Endothelial cell of umbilical vein (primary cell): ENCODE measurements at regions of chr11 and their contacts with region 1.

Region 1: DNA sequence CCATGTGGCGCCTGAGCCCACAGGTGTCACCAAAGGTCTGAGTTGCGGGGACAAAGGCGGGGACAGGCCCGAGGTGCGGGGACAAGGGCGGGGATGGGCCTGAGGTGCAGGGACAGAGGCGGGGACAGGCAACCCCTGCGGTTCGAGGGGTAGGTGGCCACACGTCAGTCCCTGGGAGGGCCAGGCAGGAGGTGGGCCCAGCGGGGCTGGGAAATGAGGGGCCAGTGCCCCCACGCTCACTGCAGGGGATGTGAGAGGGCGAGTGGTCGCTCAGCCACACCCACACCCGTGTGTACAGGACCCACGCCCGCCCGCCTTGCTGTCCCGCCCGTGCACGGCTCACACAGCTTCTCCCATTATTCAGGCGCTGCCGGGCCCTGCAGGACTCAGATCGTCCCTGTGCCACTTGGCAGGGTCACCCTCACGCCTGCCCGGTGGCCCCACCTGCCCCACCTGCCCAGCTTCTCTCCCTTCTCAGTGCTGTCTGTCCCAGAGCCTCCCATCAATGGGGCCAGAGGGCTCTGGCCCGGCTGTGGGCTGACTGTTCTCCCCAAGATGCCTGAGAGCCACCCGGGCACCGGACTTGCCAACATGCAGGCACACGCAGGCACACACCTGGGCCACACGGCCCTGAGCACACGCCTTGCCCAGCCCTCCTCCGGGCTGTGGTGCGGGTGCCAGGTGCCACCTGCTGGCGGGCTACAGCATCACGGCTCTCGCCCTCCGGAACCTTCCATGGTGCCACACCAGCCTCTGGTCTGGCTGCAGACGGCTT is 14.2 kb upstream of the MUC6 start:
- DNase-seq: peak; percentile 57
- H3K4me3 ChIP-seq: no peak overlapping the region
- H3K27ac ChIP-seq: no peak overlapping the region
- H3K4me1 ChIP-seq: no peaks in the 10 kb centered on the region
- H3K27me3 ChIP-seq: peaks cover 4 to 5% of the 10 kb centered on the region in 2 experiments
- CTCF ChIP-seq: peak; percentile 86 to 98
- POLR2A ChIP-seq: no peak

Region 2: DNA sequence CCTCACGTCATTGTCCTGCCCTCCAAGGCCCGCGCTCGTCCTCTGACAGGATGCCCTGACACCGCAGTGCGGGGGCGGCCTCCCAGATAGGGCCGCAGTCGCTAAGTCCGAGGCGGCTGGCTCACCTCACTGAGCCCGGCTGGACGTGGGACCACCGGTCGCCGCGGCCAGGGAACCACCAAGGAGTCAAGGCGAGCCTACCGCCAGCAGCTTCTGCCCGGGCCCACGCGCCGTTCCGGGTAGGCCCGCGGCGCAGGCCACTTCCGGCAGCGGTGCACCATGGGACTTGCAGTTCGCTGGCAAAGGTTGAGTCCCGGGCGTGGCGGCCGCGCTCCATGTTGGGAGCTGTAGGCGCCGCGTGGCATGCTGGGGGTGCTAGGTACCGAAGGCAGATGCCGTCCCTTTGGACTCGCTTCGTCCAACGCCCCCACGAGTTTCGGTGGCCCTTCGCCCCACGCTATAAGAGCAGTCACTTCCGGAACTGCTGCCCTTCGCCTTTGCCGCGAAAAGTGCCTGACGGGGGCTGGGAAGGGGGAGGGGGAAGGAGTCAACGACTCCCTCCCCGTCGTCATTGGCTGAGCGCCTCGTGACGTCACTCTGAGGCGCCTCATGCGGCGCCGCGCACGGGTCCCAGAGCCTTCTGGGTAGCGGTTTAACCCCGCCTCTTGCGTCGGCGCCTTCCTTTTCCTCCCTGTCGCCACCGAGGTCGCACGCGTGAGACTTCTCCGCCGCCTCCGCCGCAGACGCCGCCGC is 241.3 kb before region 1 on chr11 and contains the start of gene RPLP2:
- CTCF ChIA-PET with region 1: interaction called, 11 read pairs
- POLR2A ChIA-PET with region 1: no interaction called
- dilution Hi-C with region 1: no loop called
- intact Hi-C with region 1: no loop called
- DNase-seq: peak; percentile 96
- H3K4me3 ChIP-seq: peak within 1 kb of the TSS; percentile 77 to 90 (median 80)
- H3K27ac ChIP-seq: peak within 1 kb of the TSS; percentile 97
- H3K4me1 ChIP-seq: peaks cover 26% of the 10 kb centered on the region
- H3K27me3 ChIP-seq: no peaks in the 10 kb centered on the region
- CTCF ChIP-seq: no peak
- POLR2A ChIP-seq: peak; percentile 92
- total RNA-seq, gene RPLP2: 1,644 and 1,739 TPM in 2 replicates

Region 3: DNA sequence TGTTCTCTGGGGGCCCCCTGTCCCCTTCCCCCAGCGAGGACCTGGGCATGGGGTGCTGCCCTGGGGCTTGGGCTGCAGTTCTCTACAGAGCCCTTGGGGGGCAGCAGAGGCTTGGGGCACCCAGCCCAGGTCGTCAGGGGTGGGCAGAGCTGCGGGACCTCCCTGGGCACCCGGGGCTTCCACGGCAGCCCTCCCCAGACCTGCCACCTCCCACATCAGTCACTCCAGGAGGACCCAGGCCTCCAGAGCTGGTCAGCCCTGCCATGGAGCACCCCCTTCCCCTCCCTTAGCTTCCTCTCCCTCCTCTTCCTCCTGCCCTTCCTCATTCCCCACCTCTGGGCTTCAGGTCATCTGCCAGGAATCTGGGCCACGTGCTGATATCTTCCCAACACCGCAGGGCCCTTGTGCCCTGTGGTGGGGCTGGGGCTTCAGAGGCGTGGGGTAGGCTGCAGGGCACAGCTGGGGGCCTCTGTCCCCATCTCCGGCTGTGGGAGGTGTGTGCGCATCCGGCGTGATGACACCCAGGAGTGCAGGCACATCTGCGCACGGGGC is 202.3 kb before region 1 on chr11:
- CTCF ChIA-PET with region 1: interaction called, 46 read pairs
- POLR2A ChIA-PET with region 1: no interaction called
- dilution Hi-C with region 1: no loop called
- intact Hi-C with region 1: loop called (anchors 1 kb)
- DNase-seq: peak; percentile 32
- H3K4me3 ChIP-seq: no peak overlapping the region
- H3K27ac ChIP-seq: no peak overlapping the region
- H3K4me1 ChIP-seq: peaks cover 26% of the 10 kb centered on the region
- H3K27me3 ChIP-seq: no peaks in the 10 kb centered on the region
- CTCF ChIP-seq: peak; percentile 81 to 94
- POLR2A ChIP-seq: no peak

Region 4: GRCh38 chr11:898143-898511 is 152.6 kb before region 1 on chr11:
- CTCF ChIA-PET with region 1: interaction called, 9 read pairs
- POLR2A ChIA-PET with region 1: no interaction called
- dilution Hi-C with region 1: no loop called
- intact Hi-C with region 1: loop called (anchors 1 kb)
- DNase-seq: peak; percentile 13
- H3K4me3 ChIP-seq: no peak overlapping the region
- H3K27ac ChIP-seq: no peak overlapping the region
- H3K4me1 ChIP-seq: no peaks in the 10 kb centered on the region
- H3K27me3 ChIP-seq: no peaks in the 10 kb centered on the region
- CTCF ChIP-seq: peak in 1 of 2 donors; percentile 57
- POLR2A ChIP-seq: no peak

Region 5: DNA sequence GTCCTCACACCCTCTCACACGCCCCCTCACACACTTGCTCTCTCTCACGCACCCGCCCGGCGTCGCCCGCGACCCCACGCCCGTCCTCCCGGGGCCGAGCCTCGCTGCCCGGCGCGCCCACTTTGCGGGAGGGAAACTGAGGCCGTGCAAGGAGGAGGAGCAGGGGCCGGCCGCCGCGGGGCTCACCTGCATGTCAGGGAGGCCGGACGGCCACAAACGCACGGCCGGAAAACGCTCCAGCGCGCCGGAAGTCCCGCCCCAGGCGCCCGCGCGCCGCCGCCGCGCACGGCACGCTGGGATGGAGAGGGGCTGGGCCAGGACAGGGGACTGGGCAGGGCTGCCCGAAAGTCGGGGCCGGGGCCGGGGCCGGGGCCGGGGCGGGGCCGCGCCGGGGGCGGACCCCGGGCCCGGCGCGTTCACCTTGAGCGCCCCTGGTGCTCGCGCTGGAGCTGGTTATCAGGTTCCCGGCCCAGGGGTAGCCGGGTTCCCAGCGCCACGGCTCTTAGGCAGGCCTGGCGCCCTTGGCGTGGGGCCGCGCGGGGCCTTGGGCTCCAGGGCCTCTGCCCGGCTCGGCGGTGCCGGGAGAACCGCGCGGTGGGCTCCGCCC is 140.1 kb before region 1 on chr11 and contains the start of gene CHID1:
- CTCF ChIA-PET with region 1: no interaction called
- POLR2A ChIA-PET with region 1: no interaction called
- dilution Hi-C with region 1: no loop called
- intact Hi-C with region 1: loop called (anchors 5 kb)
- DNase-seq: peak; percentile 81
- H3K4me3 ChIP-seq: peak within 1 kb of the TSS; percentile 74 to 96 (median 81)
- H3K27ac ChIP-seq: peak within 1 kb of the TSS; percentile 53
- H3K4me1 ChIP-seq: peaks cover 8% of the 10 kb centered on the region
- H3K27me3 ChIP-seq: no peaks in the 10 kb centered on the region
- CTCF ChIP-seq: no peak
- POLR2A ChIP-seq: peak; percentile 84
- total RNA-seq, gene CHID1: 86.2 and 89.8 TPM in 2 replicates

Region 6: GRCh38 chr11:925496-926321 is 125.1 kb before region 1 on chr11 and contains the start of gene AP2A2:
- CTCF ChIA-PET with region 1: interaction called, 13 read pairs
- POLR2A ChIA-PET with region 1: no interaction called
- dilution Hi-C with region 1: no loop called
- intact Hi-C with region 1: no loop called
- DNase-seq: peak; percentile 87
- H3K4me3 ChIP-seq: peak within 1 kb of the TSS; percentile 32 to 73 (median 67)
- H3K27ac ChIP-seq: peak within 1 kb of the TSS; percentile 67
- H3K4me1 ChIP-seq: peaks cover 18% of the 10 kb centered on the region
- H3K27me3 ChIP-seq: no peaks in the 10 kb centered on the region
- CTCF ChIP-seq: peak; percentile 72 to 77
- POLR2A ChIP-seq: peak; percentile 78
- total RNA-seq, gene AP2A2: 92.5 and 92.6 TPM in 2 replicates